ENCODE measurements at regions of chr3 and their contacts with region 1.

Region 1: GRCh38 chr3:38004415-38005076 is 14.0 kb downstream of the VILL start:
- DNase-seq: peak; percentile 68 to 70
- H3K4me3 ChIP-seq: no peak overlapping the region
- H3K27ac ChIP-seq: no peak overlapping the region
- H3K4me1 ChIP-seq: no peaks in the 10 kb centered on the region
- H3K27me3 ChIP-seq: no peaks in the 10 kb centered on the region
- CTCF ChIP-seq: peak; percentile 75

Region 2: DNA sequence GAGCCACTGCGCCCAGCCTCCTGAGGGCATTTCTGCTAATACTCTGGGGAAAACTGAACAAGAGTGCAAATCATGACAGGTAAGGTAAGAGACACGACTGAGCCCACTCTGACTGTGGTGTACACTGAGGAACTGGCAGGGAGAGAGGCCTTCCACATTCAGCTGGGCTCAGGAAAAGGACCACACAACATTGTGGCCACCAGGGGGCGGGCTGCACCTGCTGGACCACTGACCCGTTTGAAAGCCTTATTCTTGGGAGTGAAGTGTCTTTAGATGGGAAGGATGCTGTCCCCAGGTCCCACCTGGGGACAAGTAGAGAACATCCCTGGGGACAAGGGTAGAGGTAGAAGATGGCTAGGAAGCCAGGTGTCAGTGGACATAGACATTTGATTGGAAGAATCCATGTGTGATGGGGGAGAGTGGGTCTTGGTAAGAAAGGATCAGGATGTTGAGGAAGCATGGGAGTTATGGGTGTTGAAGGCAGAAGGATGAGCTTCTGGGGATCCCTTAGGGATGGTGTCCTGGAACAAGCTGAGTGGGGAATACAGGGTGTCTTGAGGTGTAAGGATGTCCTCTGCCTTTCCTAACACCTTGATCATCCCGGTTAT is 149.1 kb before region 1 on chr3:
- CTCF ChIA-PET with region 1: no interaction called
- POLR2A ChIA-PET with region 1: no interaction called
- intact Hi-C with region 1: loop called (anchors 1 kb)
- DNase-seq: peak; percentile 61 to 76
- H3K4me3 ChIP-seq: no peak overlapping the region
- H3K27ac ChIP-seq: no peak overlapping the region
- H3K4me1 ChIP-seq: peaks cover 16% of the 10 kb centered on the region
- H3K27me3 ChIP-seq: no peaks in the 10 kb centered on the region
- CTCF ChIP-seq: peak; percentile 91

Region 3: DNA sequence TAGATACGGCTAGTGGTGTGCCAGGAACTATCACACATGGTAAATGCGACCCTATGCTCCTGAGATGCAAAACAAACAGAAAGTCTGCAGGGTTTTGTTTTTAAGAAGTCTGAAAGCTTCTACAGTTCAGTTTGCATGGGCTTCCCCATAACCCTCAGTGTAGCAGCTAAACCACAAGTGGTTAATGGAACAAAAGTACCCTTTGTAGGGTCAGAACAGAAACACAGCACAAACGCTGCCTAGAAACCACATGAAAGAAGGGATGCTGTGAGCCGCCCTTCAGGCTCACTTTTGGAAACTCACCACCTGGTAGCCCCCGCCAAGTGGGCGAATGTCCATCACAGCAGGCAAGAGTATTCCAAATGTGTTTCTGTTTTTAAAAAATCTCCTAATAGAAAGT is 96.6 kb before region 1 on chr3:
- CTCF ChIA-PET with region 1: no interaction called
- POLR2A ChIA-PET with region 1: no interaction called
- intact Hi-C with region 1: no loop called
- DNase-seq: no peak
- H3K4me3 ChIP-seq: no peak overlapping the region
- H3K27ac ChIP-seq: no peak overlapping the region
- H3K4me1 ChIP-seq: 0 out of 2 replicates have a peak, but pooled peaks cover 7% of the 10 kb centered on the region
- H3K27me3 ChIP-seq: no peaks in the 10 kb centered on the region
- CTCF ChIP-seq: no peak

Region 4: GRCh38 chr3:38039101-38039898 is 34.8 kb after region 1 on chr3 and contains the start of gene DLEC1:
- CTCF ChIA-PET with region 1: no interaction called
- POLR2A ChIA-PET with region 1: no interaction called
- intact Hi-C with region 1: loop called (anchors 1 kb)
- DNase-seq: peak; percentile 54 to 63
- H3K4me3 ChIP-seq: peak within 1 kb of the TSS; percentile 49
- H3K27ac ChIP-seq: no peak within 1 kb of the TSS
- H3K4me1 ChIP-seq: peaks cover 5% of the 10 kb centered on the region; the same call in 1 of the 2 replicates
- H3K27me3 ChIP-seq: no peaks in the 10 kb centered on the region
- CTCF ChIP-seq: no peak
- total RNA-seq, gene DLEC1: 0.35 and 0.45 TPM in 2 replicates

Region 5: DNA sequence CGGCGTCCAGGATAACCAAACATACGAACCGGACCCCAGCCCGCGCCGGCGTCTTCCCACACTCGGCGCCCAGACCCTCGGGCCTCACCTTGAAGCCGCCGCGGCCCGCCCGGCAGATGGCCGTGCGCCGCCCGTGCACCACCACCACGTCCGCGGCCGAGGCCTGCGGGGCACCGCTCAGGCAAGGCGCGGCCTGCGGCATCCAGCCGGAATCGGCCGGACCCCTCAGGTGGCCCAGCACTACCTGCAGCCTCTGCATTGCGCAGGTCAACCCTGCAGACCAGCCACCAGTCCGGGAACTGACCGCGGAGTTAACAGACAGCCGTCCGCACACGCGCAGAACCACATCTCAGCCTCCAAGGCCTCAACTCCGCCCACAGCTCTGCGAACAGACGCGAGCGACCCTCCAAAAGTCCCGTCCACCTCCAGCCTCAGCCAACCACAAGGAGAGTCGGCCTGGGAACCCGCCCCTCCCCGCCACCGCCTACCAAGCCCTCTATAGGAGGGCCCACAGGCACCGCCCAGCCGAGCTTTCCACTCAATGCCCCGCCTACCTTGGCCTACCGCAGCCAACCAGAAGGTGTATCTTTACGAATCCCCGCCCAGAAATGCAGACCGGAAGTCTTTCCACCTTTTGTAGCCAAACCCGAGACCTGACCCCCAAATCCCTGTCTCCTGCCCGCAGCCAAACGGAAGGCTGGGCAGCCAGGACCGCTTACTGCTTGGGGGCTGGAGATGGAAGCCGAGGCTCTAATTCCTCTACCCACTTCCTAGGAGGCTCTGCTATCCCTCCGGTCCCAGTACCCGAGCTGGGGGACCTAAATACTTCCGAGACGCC is 132.4 kb after region 1 on chr3 and contains the start of gene ACAA1:
- CTCF ChIA-PET with region 1: no interaction called
- POLR2A ChIA-PET with region 1: no interaction called
- intact Hi-C with region 1: loop called (anchors 5 kb)
- DNase-seq: peak; percentile 96 to 99
- H3K4me3 ChIP-seq: peak within 1 kb of the TSS; percentile 98
- H3K27ac ChIP-seq: peak within 1 kb of the TSS; percentile 69
- H3K4me1 ChIP-seq: peaks cover 71% of the 10 kb centered on the region
- H3K27me3 ChIP-seq: no peaks in the 10 kb centered on the region
- CTCF ChIP-seq: no peak
- total RNA-seq, gene ACAA1: 58.9 and 65.8 TPM in 2 replicates

Region 6: DNA sequence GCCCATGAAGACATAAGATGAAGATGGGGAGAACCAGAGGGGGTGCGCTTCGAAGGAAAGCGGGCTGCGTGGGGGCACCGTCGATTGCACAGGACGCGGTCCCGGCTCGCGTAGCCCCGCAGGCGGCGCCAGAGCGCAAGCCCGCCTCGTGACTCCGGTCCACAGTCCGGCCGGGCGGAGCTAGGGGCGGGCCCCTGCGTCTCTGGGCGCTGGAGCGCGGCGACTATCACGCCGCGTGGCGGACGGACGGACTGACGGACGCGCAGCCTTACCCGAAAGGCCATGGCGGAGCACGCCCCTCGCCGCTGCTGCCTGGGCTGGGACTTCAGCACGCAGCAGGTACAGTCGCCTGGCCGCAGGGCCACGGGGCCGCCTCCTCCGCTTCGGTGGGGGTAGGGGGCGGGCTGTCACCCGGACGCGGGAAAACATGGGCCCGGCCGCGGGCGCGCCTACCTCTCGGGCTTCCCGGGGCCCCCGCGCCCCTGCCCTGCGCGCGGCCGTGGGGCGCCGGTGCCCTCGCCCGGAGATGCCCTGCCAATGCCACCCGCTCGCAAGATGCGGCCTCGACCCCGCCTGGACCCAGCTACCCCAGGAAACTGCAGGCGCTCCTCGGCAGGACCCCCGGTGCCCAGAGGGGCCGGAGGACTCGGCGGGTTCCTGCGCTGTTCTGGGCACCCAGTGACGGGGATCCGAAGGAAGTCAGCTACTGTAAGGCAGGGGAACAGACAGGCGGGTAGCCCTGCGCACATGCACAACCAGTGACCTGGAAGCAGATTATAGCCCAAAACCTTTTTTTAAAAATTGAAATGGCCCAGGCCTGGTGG is 342.3 kb after region 1 on chr3 and contains the start of gene XYLB:
- CTCF ChIA-PET with region 1: no interaction called
- POLR2A ChIA-PET with region 1: no interaction called
- intact Hi-C with region 1: loop called (anchors 10 kb)
- DNase-seq: peak; percentile 66 to 82
- H3K4me3 ChIP-seq: peak within 1 kb of the TSS; percentile 81
- H3K27ac ChIP-seq: no peak within 1 kb of the TSS
- H3K4me1 ChIP-seq: peaks cover 11% of the 10 kb centered on the region
- H3K27me3 ChIP-seq: no peaks in the 10 kb centered on the region
- CTCF ChIP-seq: peak; percentile 66
- total RNA-seq, gene XYLB: 2.4 and 4.2 TPM in 2 replicates

Region 7: GRCh38 chr3:38383156-38383875 is 378.8 kb after region 1 on chr3:
- CTCF ChIA-PET with region 1: no interaction called
- POLR2A ChIA-PET with region 1: no interaction called
- intact Hi-C with region 1: no loop called
- DNase-seq: no peak
- H3K4me3 ChIP-seq: no peak overlapping the region
- H3K27ac ChIP-seq: no peak overlapping the region
- H3K4me1 ChIP-seq: no peaks in the 10 kb centered on the region
- H3K27me3 ChIP-seq: no peaks in the 10 kb centered on the region
- CTCF ChIP-seq: no peak

Region 8: DNA sequence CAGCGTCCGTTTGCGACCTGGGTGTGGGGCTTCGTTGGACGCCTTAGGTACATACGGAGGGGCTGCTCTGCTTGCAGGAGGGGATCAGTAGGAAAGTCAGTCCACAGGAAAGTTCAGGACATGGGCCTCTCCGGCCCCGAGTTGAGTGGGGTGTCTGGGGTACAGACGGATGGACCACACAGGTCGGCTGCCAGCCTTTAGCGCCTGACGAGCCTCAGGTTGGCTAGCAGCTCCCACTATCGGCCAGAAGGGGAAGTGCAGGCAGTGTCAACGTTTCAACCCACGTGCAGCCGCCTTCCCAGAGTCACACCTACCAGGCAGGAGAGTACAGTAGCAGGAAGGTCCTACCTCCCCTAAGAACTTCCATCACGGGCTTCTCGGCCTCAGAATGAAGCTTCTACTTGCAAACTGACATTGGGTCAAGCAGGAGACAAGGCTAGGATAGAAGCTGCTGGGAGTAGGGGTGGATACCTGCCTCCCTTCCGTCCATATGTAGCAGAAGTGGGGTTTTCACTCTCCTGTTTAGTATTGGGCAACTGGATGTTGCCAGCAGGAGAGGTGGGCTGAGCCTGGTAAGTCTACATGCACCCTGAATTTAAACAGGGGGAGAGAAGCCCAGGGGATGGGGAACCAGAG is 646.7 kb after region 1 on chr3:
- CTCF ChIA-PET with region 1: no interaction called
- POLR2A ChIA-PET with region 1: no interaction called
- intact Hi-C with region 1: loop called (anchors 5 kb)
- DNase-seq: peak in 1 of 2 experiments; percentile 50
- H3K4me3 ChIP-seq: no peak overlapping the region
- H3K27ac ChIP-seq: no peak overlapping the region
- H3K4me1 ChIP-seq: no peaks in the 10 kb centered on the region
- H3K27me3 ChIP-seq: no peaks in the 10 kb centered on the region; the same call in 1 of the 2 replicates
- CTCF ChIP-seq: peak; percentile 83